ENCODE measurements at regions of chr9 and their contacts with region 1.

Region 1: GRCh38 chr9:127734747-127735529 is at the start of gene TOR2A:
- ATAC-seq: peak; percentile 86 to 94 (median 90)
- H3K4me3 ChIP-seq: peak within 1 kb of the TSS; percentile 66 to 88 (median 76)
- H3K27ac ChIP-seq: peak within 1 kb of the TSS; percentile 88 to 89
- H3K4me1 ChIP-seq: peaks cover 14% of the 10 kb centered on the region in 2 donors
- total RNA-seq, gene TOR2A: 5.5 to 18.1 (median 11.8) TPM

Region 2: GRCh38 chr9:127783111-127784008 is 48.4 kb after region 1 on chr9:
- in situ Hi-C with region 1: loop called in 1 of 9 experiments (anchors 5 kb)
- ATAC-seq: no peak
- H3K4me3 ChIP-seq: no peak overlapping the region
- H3K27ac ChIP-seq: no peak overlapping the region
- H3K4me1 ChIP-seq: peaks cover 11 to 15% of the 10 kb centered on the region in 2 donors

Region 3: GRCh38 chr9:127916665-127917613 is 182.0 kb after region 1 on chr9 and contains the start of gene ST6GALNAC4:
- in situ Hi-C with region 1: loop called in 1 of 9 experiments (anchors 10 kb)
- ATAC-seq: peak; percentile 69 to 92 (median 88)
- H3K4me3 ChIP-seq: peak within 1 kb of the TSS; percentile 45 to 57 (median 46)
- H3K27ac ChIP-seq: peak within 1 kb of the TSS in 1 of 2 donors; percentile 17
- H3K4me1 ChIP-seq: peaks cover 6 to 21% of the 10 kb centered on the region in 2 donors
- total RNA-seq, gene ST6GALNAC4: 6.5 to 54.7 (median 14.6) TPM

Region 4: DNA sequence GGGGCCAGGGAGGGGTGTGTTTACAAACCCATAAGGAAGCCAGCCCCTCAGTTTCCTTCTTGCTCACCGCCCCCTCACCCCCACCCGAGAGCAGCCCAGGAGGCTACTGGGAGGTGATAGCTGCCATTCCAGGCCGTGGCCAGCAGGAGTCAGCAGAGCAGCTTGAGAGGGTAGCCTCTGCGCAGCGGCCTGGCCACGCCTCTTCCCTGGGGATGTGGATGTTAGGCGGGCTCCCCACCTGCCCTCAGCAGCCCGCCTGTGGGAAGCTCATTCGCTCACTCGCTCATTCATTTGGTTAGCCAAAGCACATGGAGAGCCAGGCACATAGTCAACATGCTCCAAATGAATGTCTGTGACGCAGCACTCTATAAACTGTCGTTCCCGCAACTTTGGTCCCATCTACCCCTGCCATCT is 208.8 kb after region 1 on chr9:
- in situ Hi-C with region 1: no loop called
- ATAC-seq: peak; percentile 66 to 94 (median 72)
- H3K4me3 ChIP-seq: no peak overlapping the region
- H3K27ac ChIP-seq: no peak overlapping the region
- H3K4me1 ChIP-seq: peaks cover 0 to 9% of the 10 kb centered on the region in 2 donors

Measured in motor neuron (in vitro differentiated cells).